ENCODE measurements at regions of chr19 and their contacts with region 1.

Region 1: DNA sequence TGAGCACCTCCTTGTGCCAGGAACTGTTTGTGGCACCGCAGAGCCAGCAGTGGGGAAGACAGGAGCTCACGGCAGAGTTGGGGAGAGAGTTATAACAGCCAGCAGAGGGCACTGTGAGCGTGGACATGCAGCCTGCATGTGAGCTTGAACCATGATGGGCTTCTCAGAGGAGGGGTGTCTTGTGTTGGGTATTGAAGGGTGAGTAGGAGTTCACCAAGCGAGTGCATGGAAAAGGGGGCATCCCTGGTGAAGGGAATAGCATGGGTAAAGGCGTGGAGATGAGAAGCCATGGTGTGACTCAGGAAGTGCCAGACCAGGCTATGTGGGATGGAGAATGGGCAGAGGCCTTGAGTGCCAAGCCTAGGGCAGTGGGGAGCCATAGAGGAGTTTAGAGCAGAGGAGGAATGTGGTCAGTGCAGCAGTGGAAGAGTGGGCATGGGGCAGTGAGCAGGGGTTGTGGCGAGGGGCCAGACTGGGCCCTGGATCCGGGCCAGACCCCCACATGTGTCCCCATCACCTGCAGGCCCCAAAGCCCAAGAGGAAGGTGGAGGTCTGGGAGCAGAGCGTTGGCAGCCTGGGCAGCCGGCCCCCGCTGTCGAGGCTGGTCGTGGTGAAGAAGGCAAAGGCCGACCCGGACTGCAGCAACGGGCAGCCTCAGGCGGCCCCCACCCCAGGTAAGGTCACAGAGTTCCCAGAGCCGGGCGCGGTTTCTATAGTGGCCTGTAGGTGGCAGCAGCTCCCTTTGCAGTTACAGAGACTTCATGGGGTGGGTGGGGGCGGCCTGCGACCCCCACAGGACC is 11.8 kb upstream of the SHD start:
- DNase-seq: peak; percentile 42 to 69
- ATAC-seq: peak; percentile 61

Region 2: DNA sequence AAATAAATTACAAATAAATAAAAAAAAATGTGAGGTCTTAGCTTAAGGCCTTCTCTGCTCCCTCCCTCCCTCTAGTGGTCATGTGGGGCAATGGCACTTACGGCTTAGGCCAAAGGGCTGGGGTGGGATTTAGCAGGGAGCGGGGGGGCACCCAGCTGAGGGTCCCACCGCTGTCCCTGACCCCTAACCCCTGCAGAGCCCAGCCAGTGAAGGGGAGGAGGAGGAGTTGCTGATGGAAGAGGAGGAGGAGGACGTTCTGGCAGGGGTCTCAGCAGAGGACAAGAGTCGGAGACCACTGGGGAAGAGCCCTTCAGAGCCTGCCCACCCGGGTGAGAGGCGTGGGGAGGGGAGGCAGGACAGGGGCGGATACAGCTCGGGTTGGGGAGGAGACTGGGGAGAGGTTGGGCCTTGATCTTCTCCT is 85.4 kb after region 1 on chr19:
- intact Hi-C with region 1: loop called in 1 of 2 experiments (anchors 5 kb)
- DNase-seq: peak in 1 of 2 donors; percentile 65
- ATAC-seq: peak; percentile 65

Measured in left colon (tissue), 2 donors.